ENCODE measurements at regions of chr2 and their contacts with region 1.

Region 1: GRCh38 chr2:130985206-130985780 is 108.0 kb downstream of the FAM168B start:
- DNase-seq: no peak
- H3K27ac ChIP-seq: no peak overlapping the region
- CTCF ChIP-seq: no peak

Region 2: DNA sequence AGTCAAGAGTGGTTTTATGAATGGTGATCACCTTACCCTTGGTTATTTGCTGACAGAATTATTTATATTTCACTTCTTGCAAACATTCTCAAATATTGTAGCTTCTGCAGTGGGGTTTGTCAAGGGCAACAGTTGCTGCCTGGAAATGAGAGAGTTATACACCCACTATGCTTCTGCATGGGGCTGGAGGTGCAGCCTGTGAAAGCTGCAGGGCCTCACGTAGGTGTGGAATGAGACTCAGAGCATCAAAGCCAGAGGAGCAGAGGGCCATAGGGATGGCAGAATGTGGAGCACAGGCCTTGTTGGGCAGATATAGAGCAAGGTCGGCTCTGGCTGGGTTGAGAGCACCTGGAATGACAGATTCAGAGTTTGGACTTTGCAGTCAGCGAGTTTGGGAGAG is 20.4 kb before region 1 on chr2:
- CTCF ChIA-PET with region 1: interaction called, 6 read pairs
- POLR2A ChIA-PET with region 1: interaction called, 10 read pairs
- DNase-seq: no peak
- H3K27ac ChIP-seq: no peak overlapping the region
- CTCF ChIP-seq: no peak